ENCODE measurements at regions of chr10 and their contacts with region 1.

Region 1: GRCh38 chr10:128047351-128047750 is 78.9 kb downstream of the MKI67 start:
- DNase-seq: peak; percentile 80 to 92
- ATAC-seq: peak; percentile 85 to 96 (median 88)
- H3K4me3 ChIP-seq: peak overlapping the region; percentile 61
- H3K4me3 Mint-ChIP-seq: peak overlapping the region; percentile 96
- H3K27ac ChIP-seq: peak overlapping the region; percentile 96
- H3K27ac Mint-ChIP-seq: peak overlapping the region; percentile 97 to 99
- H3K4me1 ChIP-seq: peaks cover 79% of the 10 kb centered on the region
- H3K4me1 Mint-ChIP-seq: peaks cover 61 to 76% of the 10 kb centered on the region in 2 donors
- H3K27me3 ChIP-seq: no peaks in the 10 kb centered on the region
- H3K27me3 Mint-ChIP-seq: no peaks in the 10 kb centered on the region
- CTCF ChIP-seq: no peak

Region 2: DNA sequence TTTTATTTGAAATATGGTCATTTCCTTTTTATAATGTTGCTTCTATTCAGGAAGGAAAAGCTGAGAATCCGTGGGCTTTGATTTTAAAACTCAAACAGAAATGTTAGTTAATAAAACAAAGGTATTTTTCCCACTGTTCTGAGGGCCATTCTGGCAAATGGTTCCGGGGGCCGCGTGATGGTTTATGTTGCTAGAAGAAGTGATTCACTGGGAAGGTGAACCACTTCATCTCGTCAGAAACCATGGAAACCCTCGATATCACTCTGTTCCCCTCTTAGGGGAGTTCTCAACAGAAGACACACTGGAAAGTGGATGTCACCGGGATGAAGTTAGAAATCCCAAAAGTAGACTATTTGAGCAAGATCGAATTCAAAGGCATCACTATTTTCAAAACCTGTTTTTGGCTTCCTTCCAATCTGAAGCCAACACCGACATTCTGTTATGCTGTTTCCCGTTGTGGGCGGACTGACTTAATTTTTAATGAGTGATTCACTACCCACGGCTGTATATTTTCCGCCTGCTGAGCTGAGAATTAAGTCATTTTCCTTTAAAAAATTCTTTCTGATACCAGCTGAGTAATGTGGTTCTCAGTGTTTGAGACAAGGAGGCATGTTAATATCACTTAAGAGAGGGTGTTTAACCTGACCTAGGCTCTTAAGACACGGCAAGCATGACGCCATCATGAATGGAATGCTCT is 56.4 kb before region 1 on chr10:
- intact Hi-C with region 1: loop called (anchors 1 kb)
- DNase-seq: peak in 1 of 2 donors; percentile 63
- ATAC-seq: peak; percentile 49 to 66 (median 56)
- H3K4me3 ChIP-seq: no peak overlapping the region
- H3K4me3 Mint-ChIP-seq: peak overlapping the region; percentile 66
- H3K27ac ChIP-seq: peak overlapping the region; percentile 58
- H3K27ac Mint-ChIP-seq: peak overlapping the region; percentile 83 to 84
- H3K4me1 ChIP-seq: peaks cover 8% of the 10 kb centered on the region
- H3K4me1 Mint-ChIP-seq: peaks cover 18 to 20% of the 10 kb centered on the region in 2 donors
- H3K27me3 ChIP-seq: no peaks in the 10 kb centered on the region
- H3K27me3 Mint-ChIP-seq: no peaks in the 10 kb centered on the region
- CTCF ChIP-seq: no peak

Region 3: GRCh38 chr10:128035557-128035973 is 11.8 kb before region 1 on chr10:
- intact Hi-C with region 1: loop called (anchors 1 kb)
- DNase-seq: peak; percentile 72 to 80
- ATAC-seq: peak; percentile 88 to 97 (median 97)
- H3K4me3 ChIP-seq: no peak overlapping the region
- H3K4me3 Mint-ChIP-seq: no peak overlapping the region
- H3K27ac ChIP-seq: no peak overlapping the region
- H3K27ac Mint-ChIP-seq: peak overlapping the region in 1 of 2 donors; percentile 53
- H3K4me1 ChIP-seq: peaks cover 6% of the 10 kb centered on the region
- H3K4me1 Mint-ChIP-seq: peaks cover 0 to 14% of the 10 kb centered on the region in 2 donors
- H3K27me3 ChIP-seq: no peaks in the 10 kb centered on the region
- H3K27me3 Mint-ChIP-seq: no peaks in the 10 kb centered on the region
- CTCF ChIP-seq: peak; percentile 92

Region 4: DNA sequence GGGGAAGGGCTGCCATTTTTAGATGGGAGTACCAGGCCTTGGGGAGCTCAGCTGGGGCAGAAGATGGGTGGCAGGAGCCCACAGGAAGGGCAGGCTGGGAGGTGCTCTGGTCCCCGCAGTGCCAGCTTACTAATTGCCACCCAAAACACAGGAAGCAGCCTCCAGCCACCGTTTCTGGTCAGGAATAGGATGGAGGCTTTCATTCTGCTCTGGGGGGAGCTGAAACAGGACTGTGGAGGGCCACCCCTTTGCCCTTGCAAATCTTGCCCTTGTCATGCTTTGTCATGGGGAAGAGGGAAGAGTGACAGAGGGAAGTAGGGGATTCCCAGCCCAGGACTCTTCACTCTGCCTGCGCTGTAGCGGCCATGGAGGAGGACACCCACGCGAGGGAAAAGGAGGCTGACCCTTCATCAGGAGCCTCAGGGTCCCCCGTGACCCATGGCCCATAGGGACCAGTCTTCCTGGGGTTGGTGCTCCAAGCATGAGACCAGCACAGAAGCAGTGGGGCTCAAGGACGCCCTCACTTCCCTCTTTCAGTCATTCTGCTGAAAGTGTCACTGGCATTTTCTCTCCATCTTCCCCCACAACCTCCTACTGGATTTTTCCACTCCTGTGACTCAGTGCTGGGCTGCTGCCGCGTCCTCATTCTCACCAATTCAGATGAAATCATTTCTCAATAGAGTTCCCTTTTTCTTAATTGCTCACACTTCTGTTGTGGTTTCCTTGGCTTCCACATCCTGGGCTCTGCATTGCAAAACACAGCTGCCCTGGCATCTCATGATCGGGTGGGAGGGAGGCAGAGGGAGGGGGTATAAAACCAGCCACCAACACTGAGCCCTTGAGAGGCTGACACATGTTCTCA is 17.0 kb after region 1 on chr10:
- intact Hi-C with region 1: loop called (anchors 1 kb)
- DNase-seq: peak; percentile 63 to 86
- ATAC-seq: peak; percentile 60 to 76 (median 64)
- H3K4me3 ChIP-seq: no peak overlapping the region
- H3K4me3 Mint-ChIP-seq: peak overlapping the region; percentile 88
- H3K27ac ChIP-seq: peak overlapping the region; percentile 86
- H3K27ac Mint-ChIP-seq: peak overlapping the region; percentile 88
- H3K4me1 ChIP-seq: peaks cover 87% of the 10 kb centered on the region
- H3K4me1 Mint-ChIP-seq: peaks cover 84 to 85% of the 10 kb centered on the region in 2 donors
- H3K27me3 ChIP-seq: no peaks in the 10 kb centered on the region
- H3K27me3 Mint-ChIP-seq: no peaks in the 10 kb centered on the region
- CTCF ChIP-seq: no peak

Region 5: GRCh38 chr10:128167926-128168520 is 120.7 kb after region 1 on chr10:
- intact Hi-C with region 1: no loop called
- DNase-seq: no peak
- ATAC-seq: no peak
- H3K4me3 ChIP-seq: no peak overlapping the region
- H3K4me3 Mint-ChIP-seq: no peak overlapping the region
- H3K27ac ChIP-seq: no peak overlapping the region
- H3K27ac Mint-ChIP-seq: no peak overlapping the region
- H3K4me1 ChIP-seq: no peaks in the 10 kb centered on the region
- H3K4me1 Mint-ChIP-seq: no peaks in the 10 kb centered on the region
- H3K27me3 ChIP-seq: peaks cover 3% of the 10 kb centered on the region
- H3K27me3 Mint-ChIP-seq: peaks cover 18 to 42% of the 10 kb centered on the region in 2 donors
- CTCF ChIP-seq: no peak

Measured in natural killer cell (primary cell).